ENCODE measurements at regions of chr2 and their contacts with region 1.

Region 1: GRCh38 chr2:219278655-219279516 is at the start of gene DNAJB2:
- DNase-seq: peak; percentile 99
- H3K4me3 ChIP-seq: peak within 1 kb of the TSS; percentile 58
- H3K27ac ChIP-seq: peak within 1 kb of the TSS; percentile 90
- H3K4me1 ChIP-seq: peaks cover 20% of the 10 kb centered on the region
- H3K27me3 ChIP-seq: no peaks in the 10 kb centered on the region
- CTCF ChIP-seq: no peak
- total RNA-seq, gene DNAJB2: 24.4 and 24.6 TPM in 2 replicates

Region 2: DNA sequence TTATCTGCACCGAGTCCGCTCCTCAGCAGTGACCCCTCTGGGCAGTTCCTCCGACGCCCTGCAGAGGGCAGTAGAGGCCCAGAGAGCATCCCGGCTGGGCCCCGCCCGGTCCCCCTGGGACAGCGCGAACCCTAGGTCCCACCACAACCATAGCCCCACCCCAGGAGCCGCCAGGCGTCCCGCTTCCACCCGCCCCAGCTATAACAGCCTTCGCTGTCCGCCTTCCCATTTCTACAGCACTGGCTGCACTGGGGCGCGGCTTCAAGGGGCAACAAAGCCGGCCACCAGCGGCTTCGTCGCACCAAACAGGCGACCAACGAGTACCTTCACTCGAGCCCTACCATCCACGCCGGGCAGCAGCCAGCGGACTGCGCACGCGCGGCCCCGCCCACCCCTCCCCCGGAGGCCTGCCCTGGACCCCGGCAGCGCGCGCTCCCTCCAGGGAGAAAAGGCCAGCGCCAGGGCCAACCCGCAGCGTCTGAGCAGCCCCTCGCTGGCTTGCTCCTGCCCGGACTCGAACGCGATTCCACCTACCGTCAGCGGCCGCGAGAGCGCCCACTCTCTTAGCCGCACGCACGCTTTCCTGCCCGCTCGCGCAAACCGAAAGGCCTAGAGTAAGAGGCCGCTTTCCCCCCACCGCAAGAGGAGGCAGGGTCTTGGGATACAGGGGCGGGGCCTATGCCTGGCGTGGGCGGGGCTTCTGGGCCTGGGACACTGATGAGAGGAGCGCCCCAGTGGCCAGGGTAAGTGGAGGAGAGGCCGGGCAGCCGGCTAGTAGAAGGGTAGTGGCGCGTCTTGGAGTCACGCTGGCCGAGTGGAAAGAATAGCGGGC is 118.5 kb before region 1 on chr2 and contains the start of gene NHEJ1:
- CTCF ChIA-PET with region 1: no interaction called
- POLR2A ChIA-PET with region 1: no interaction called
- intact Hi-C with region 1: loop called (anchors 5 kb)
- DNase-seq: peak; percentile 92
- H3K4me3 ChIP-seq: peak within 1 kb of the TSS; percentile 68
- H3K27ac ChIP-seq: peak within 1 kb of the TSS; percentile 89
- H3K4me1 ChIP-seq: peaks cover 4% of the 10 kb centered on the region
- H3K27me3 ChIP-seq: no peaks in the 10 kb centered on the region
- CTCF ChIP-seq: peak; percentile 98
- total RNA-seq, gene NHEJ1: 16.6 and 18.0 TPM in 2 replicates

Region 3: GRCh38 chr2:219252900-219253752 is 25.8 kb before region 1 on chr2 and contains the start of gene TUBA4B:
- CTCF ChIA-PET with region 1: interaction called, 10 read pairs
- POLR2A ChIA-PET with region 1: no interaction called
- intact Hi-C with region 1: no loop called
- DNase-seq: no peak
- H3K4me3 ChIP-seq: peak within 1 kb of the TSS; percentile 71
- H3K27ac ChIP-seq: peak within 1 kb of the TSS; percentile 62
- H3K4me1 ChIP-seq: peaks cover 37% of the 10 kb centered on the region
- H3K27me3 ChIP-seq: peaks cover 22% of the 10 kb centered on the region
- CTCF ChIP-seq: no peak
- total RNA-seq, gene TUBA4B: not detected in 2 replicates

Region 4: GRCh38 chr2:219418155-219418569 is 139.3 kb after region 1 on chr2 and contains the start of gene DES:
- CTCF ChIA-PET with region 1: no interaction called
- POLR2A ChIA-PET with region 1: no interaction called
- intact Hi-C with region 1: no loop called
- DNase-seq: no peak
- H3K4me3 ChIP-seq: no peak within 1 kb of the TSS
- H3K27ac ChIP-seq: no peak within 1 kb of the TSS
- H3K4me1 ChIP-seq: peaks cover 15% of the 10 kb centered on the region
- H3K27me3 ChIP-seq: no peaks in the 10 kb centered on the region
- CTCF ChIP-seq: no peak
- total RNA-seq, gene DES: not detected in 2 replicates

Region 5: DNA sequence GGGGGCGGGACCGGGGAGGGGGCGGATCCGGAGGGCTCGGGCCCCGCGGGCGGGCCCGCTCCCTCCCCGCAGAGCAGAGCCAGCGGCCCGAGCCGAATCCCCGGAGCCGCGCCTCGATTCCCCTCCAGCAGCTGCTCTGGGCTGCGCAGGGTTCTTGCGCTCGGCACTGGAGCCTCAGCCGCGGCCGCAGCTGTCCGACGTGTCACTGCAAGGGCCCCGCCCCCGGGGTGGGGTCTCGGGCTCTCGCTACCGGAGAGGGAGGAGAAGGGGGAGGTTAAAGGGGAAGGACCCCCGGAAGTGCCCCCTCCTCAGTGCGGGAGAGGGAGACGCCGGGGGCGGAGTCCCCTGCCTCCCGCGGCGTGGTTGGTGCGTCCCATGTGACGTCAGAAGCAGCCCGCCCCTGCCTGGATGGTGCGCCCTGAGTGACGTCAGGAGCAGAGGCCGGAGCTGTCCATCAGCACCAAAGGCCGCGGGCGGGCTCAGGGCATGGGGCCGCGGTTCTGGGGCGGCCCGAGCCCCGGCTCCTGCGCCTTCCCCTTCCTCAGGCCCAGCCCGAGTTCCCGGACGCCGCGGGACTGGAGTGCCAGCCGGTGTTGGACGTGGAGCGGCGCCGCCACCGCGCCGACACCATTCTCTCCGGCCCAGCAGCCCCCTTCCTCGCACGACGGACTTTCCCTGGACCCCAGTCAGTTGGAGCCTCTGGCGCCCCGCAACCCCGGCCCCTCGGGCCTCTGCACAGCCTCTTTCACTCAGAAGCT is 264.9 kb after region 1 on chr2 and contains the starts of genes CHPF and TMEM198:
- CTCF ChIA-PET with region 1: no interaction called
- POLR2A ChIA-PET with region 1: no interaction called
- intact Hi-C with region 1: no loop called
- DNase-seq: peak; percentile 97
- H3K4me3 ChIP-seq: peak within 1 kb of the TSS; percentile 64
- H3K27ac ChIP-seq: peak within 1 kb of the TSS; percentile 73
- H3K4me1 ChIP-seq: peaks cover 11% of the 10 kb centered on the region
- H3K27me3 ChIP-seq: no peaks in the 10 kb centered on the region
- CTCF ChIP-seq: no peak
- total RNA-seq, gene CHPF: 13.8 and 15.8 TPM in 2 replicates
- total RNA-seq, gene TMEM198: 4.6 and 7.6 TPM in 2 replicates

Region 6: GRCh38 chr2:219576493-219577388 is 297.9 kb after region 1 on chr2:
- CTCF ChIA-PET with region 1: no interaction called
- POLR2A ChIA-PET with region 1: no interaction called
- intact Hi-C with region 1: no loop called
- DNase-seq: no peak
- H3K4me3 ChIP-seq: no peak overlapping the region
- H3K27ac ChIP-seq: no peak overlapping the region
- H3K4me1 ChIP-seq: peaks cover 3% of the 10 kb centered on the region
- H3K27me3 ChIP-seq: no peaks in the 10 kb centered on the region
- CTCF ChIP-seq: no peak

Measured in A673 (cell line).